ENCODE measurements at regions of chr12 and their contacts with region 1.

Region 1: DNA sequence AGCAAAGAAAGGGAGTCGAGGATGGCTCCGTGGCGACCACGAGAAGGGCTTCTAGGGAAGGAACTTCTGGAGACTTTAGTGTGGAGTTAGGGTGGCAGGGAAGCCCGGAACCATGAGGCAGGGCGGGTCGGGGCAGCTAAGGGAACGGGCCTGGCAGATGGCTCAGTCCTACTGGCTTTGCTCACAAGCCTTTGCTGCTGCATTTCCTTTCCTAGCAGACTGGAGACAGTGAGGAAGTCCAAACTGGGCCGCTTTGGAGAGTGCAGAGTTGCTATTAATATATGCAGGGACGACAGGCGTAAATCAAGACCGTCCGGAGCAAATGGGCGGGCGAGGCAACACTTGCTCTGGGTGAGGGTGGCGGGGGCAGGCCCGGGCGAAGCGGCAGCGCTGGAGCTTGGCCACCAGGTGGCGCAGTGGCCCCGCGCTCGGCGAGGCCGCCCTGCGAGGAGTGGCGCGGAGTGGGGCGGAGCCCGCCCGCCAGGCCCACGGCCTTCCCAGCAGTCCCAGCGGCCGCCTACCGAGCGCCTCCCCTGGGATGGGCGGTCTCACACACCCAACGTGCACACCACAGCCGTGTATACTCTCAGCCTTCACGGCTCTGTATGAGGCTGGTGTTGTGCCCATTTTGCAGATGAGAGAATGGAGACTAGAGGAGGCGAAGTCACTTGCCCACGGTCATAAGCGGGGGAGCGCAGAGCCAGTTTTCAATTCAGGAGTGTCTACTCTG is 24.4 kb upstream of the LRTM2 start:
- DNase-seq: peak; percentile 98
- ATAC-seq: peak; percentile 96
- H3K4me3 Mint-ChIP-seq: peak overlapping the region; percentile 90
- H3K27ac Mint-ChIP-seq: peak overlapping the region; percentile 77
- H3K4me1 Mint-ChIP-seq: peaks cover 20% of the 10 kb centered on the region
- H3K27me3 Mint-ChIP-seq: no peaks in the 10 kb centered on the region

Region 2: DNA sequence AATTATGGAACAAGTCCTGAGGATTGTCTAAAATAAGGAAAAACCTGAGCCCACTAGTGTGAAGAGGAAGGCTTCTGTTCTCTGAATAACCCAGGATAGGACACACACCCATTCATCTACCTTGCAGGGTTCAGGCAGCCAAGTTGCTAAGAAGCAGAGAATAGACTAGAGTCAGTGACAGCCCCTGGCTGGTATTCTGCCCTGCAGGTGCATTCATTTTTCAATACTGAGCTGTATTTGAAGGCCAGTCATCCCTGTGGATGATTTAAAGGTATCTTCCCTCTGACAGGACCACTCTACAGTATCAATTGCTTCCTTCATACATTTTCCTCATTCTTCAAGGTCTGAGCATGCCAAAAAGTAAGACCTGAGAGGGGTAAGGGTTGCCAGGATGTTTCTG is 144.0 kb before region 1 on chr12:
- POLR2A ChIA-PET with region 1: interaction called, 12 read pairs
- DNase-seq: no peak
- ATAC-seq: no peak
- H3K4me3 Mint-ChIP-seq: no peak overlapping the region
- H3K27ac Mint-ChIP-seq: no peak overlapping the region
- H3K4me1 Mint-ChIP-seq: peaks cover 8% of the 10 kb centered on the region
- H3K27me3 Mint-ChIP-seq: peaks cover 46% of the 10 kb centered on the region

Region 3: GRCh38 chr12:1776170-1776948 is 19.6 kb before region 1 on chr12:
- POLR2A ChIA-PET with region 1: no interaction called
- DNase-seq: no peak
- ATAC-seq: no peak
- H3K4me3 Mint-ChIP-seq: no peak overlapping the region
- H3K27ac Mint-ChIP-seq: no peak overlapping the region
- H3K4me1 Mint-ChIP-seq: peaks cover 1% of the 10 kb centered on the region
- H3K27me3 Mint-ChIP-seq: no peaks in the 10 kb centered on the region

Region 4: DNA sequence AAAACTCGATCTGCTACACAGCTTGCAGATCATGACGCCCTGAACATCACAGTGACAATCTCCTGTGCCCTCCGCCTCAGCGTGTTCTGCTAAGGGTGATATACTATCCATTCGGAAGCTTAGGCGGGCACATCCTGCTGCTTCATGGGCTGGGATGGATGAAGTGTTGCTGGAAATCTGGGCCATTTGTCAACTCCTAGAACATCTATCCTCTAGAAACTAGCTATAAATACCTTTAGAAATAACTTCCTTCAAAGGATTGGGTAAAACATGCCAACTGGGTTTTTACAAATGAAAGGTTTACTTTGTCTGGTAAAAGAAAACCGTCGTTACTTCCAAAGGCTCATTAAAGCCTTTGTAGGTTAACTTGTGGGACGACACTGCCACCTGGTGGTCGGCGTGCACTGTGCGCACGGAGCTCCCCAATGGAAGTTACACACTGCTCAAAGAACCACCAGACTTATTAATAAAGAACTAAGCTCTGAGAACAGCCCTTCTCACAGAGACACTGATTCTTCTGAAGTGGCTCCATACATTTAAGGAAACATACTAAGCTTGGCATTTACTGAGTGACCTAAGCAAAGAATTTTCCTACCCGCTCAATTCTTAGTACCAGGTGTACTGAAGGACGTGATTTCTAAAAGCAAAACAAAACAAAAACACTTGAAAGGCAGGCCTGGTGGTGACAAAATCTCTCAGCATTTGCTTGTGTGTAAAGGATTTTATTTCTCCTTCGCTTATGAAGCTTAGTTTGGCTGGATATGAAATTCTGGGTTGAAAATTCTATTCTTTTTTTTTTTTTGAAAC is 144.1 kb after region 1 on chr12:
- POLR2A ChIA-PET with region 1: interaction called, 22 read pairs
- DNase-seq: peak; percentile 89
- ATAC-seq: peak; percentile 96
- H3K4me3 Mint-ChIP-seq: no peak overlapping the region
- H3K27ac Mint-ChIP-seq: peak overlapping the region; percentile 52
- H3K4me1 Mint-ChIP-seq: no peaks in the 10 kb centered on the region
- H3K27me3 Mint-ChIP-seq: no peaks in the 10 kb centered on the region